Psoas muscle (tissue), 8 donors: ENCODE measurements at regions of chr7 and their contacts with region 1.

Region 1: GRCh38 chr7:47435889-47436312 is 146.0 kb downstream of the TNS3 start:
- DNase-seq: peak; percentile 73 to 78
- ATAC-seq: peak; percentile 73 to 89 (median 80)
- H3K4me3 ChIP-seq: no peak overlapping the region
- H3K27ac ChIP-seq: no peak overlapping the region
- H3K4me1 ChIP-seq: no peaks in the 10 kb centered on the region
- H3K27me3 ChIP-seq: no peaks in the 10 kb centered on the region
- CTCF ChIP-seq: peak; percentile 72

Region 2: GRCh38 chr7:47266131-47266706 is 169.7 kb before region 1 on chr7:
- intact Hi-C with region 1: loop called (anchors 5 kb)
- DNase-seq: peak; percentile 50 to 74
- ATAC-seq: peak; percentile 82 to 90 (median 86)
- H3K4me3 ChIP-seq: no peak overlapping the region
- H3K27ac ChIP-seq: no peak overlapping the region
- H3K4me1 ChIP-seq: peaks cover 4% of the 10 kb centered on the region
- H3K27me3 ChIP-seq: no peaks in the 10 kb centered on the region
- CTCF ChIP-seq: peak; percentile 94

Region 3: GRCh38 chr7:47273974-47274766 is 161.7 kb before region 1 on chr7:
- intact Hi-C with region 1: loop called (anchors 5 kb)
- DNase-seq: no peak
- ATAC-seq: peak in 2 of 4 donors; percentile 17 to 23
- H3K4me3 ChIP-seq: no peak overlapping the region
- H3K27ac ChIP-seq: no peak overlapping the region
- H3K4me1 ChIP-seq: no peaks in the 10 kb centered on the region
- H3K27me3 ChIP-seq: no peaks in the 10 kb centered on the region
- CTCF ChIP-seq: no peak